Cardiac septum (tissue), 1 donor: ENCODE measurements at regions of chr11 and their contacts with region 1.

Region 1: DNA sequence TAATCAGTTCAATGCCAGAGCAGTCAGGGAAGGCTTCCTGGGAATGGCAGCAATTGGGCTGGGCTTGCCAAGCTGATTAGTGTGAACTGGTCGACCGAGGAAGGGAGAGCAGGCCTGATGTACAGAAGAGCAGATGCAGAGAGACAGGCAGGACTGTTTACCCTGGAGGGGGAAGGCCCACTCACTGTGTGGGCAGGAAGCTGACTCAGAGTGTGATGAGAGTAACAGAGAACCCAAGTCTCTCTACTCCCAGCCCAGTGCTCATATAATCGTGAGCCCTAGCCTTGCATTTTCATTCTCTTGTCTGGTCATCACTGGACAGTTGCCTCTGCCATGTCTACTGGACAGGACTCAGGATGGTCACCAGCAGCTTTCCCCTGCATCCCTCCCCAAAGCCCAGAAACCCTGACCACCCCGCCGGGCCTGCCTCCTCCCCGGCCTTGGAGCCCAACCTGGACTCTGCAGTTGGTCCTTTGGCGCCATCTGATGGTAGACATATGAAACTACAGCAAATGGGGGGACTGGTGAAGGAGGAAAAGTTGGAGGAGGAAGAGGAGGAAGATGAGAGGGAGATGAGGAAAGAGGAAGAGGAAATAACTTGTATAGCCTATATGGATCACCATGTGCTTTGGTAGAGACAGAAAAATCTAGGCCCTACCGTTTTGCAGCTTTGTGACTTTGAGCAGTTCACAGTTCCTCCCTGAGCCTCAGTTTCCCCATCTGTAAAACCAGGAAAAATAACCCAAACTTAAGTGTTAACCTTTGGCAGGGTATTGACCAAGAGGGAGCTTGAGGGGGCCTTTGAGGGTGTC is 43.4 kb upstream of the PRDM11 start:
- DNase-seq: no peak

Region 2: DNA sequence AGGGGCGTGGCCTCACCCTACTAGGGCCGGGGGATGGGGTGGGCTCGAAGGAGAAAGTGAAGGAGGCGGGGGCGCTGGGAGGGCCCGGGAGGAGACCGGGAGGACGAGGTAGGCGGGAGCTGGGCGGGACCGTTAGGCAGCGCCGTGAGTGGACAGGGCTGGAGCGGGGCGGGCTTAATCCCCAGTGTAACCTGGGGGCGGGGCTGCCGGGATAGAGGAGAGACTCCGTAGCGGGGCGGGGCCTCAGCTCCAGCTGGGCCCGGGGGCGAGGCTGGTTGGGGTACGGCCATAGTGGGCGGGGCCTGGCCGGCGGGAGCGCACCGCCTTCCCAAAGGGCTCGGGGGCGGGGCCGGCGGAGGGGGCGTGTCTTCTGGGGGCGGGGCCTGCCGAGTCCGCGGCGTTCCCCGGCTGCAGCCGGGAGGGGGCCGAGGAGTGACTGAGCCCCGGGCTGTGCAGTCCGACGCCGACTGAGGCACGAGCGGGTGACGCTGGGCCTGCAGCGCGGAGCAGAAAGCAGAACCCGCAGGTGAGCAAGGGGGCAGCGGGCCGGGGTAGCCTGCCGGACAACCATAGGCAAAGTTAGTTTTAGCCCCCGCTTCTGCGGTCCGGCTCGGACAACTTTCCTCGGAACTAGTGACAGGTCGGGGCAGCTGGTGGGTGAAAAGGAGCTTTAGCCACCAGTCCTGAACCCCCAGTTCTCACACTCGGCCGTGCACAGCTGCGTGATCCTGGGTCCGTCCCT is 537.6 kb before region 1 on chr11 and contains the start of gene CD82:
- intact Hi-C with region 1: loop called (anchors 10 kb)
- DNase-seq: peak; percentile 100
- total RNA-seq, gene CD82: 27.9 TPM

Region 3: DNA sequence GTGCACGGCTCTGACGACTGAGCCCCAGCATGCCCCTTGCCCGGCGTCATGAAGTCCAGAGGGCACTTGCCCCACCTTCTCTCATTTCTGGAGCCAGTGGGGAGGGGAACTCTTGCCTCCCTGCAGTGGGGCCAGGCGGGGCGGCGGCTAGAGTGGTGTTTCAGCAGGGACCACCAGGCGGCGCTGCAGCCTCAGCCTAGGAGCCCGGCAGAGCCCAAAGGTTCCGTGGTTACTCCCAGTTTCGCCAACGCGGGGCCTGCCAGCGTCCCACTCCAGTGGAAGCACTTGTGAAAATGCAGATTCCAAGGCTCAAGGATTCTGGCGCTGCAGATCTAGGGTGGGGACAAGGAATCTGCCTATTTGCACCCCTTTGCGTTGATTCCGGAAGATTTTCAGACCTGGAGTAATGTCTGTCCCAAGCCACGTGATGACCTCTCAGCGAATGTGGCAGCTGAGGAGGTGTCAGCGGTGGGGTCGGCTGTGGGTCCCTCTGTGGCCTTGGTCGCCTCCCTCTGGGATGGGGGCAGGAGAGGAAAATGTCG is 481.8 kb before region 1 on chr11:
- intact Hi-C with region 1: loop called (anchors 5 kb)
- DNase-seq: peak; percentile 91

Region 4: GRCh38 chr11:44936525-44936924 is 166.5 kb before region 1 on chr11:
- intact Hi-C with region 1: loop called (anchors 1 kb)
- DNase-seq: peak; percentile 91

Region 5: DNA sequence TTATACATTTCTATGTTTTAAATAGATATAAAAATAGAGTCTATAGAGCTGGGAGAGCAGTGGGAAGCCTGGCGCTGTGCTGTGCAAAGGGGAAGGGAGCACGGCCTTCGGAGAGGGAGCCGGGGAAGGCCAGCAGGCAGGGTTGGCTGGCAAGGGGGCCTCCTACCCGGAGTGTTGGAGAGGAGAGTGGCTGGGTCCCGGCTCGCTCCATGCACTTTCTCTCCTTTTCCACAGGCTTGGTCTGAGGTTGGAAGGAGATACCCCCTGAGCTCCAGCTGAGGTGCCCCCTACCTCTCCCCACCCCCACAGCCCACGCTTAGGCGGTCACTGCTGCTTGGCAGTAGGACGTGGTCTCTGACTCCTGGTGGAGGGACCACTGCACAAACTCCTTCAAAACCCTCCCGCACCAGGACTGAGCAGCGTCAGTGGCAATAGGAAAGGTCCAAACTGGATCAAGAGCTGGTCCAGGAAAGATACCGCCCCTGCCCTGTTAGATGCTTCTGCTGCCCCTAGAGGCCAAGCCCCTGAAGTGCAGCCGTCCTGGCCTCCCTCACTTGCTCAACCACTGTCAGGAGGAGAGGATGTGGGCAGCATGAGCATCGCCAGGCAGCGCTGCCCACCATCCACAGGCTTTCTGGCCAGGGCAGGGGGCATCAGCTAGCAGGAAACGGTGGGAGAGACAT is 130.2 kb after region 1 on chr11:
- intact Hi-C with region 1: loop called (anchors 5 kb)
- DNase-seq: no peak